MCF 10A (cell line): ENCODE measurements at regions of chr12 and their contacts with region 1.

Region 1: GRCh38 chr12:2682296-2683251 is 112.2 kb upstream of the FKBP4 start:
- DNase-seq: peak; percentile 55
- H3K4me3 Mint-ChIP-seq: no peak overlapping the region
- H3K27ac Mint-ChIP-seq: no peak overlapping the region
- H3K4me1 Mint-ChIP-seq: no peaks in the 10 kb centered on the region
- H3K27me3 Mint-ChIP-seq: peaks cover 14% of the 10 kb centered on the region
- CTCF ChIP-seq: peak; percentile 37

Region 2: DNA sequence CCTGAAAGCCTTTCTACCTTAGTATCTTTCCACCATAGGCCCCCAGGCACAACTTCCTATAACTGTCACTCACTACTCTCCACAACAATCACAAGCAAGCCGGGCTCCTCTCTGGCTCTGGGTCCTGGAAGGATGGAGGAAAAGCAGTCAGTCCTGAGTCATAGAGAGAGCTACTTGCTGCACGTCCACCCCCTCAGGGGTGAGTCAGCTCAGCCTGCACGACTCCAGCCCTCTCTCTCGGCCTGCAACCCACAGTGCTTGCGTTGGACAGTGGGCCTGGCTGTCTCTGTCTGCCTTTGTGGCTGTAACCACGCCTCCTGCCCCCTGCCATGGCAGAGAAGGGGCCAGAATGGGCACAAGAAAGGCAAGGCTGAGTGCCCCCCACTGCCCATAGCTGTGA is 41.9 kb before region 1 on chr12:
- CTCF ChIA-PET with region 1: interaction called, 3 read pairs
- POLR2A ChIA-PET with region 1: no interaction called
- intact Hi-C with region 1: loop called (anchors 1 kb)
- DNase-seq: peak; percentile 94
- H3K4me3 Mint-ChIP-seq: peak overlapping the region; percentile 28
- H3K27ac Mint-ChIP-seq: peak overlapping the region; percentile 61
- H3K4me1 Mint-ChIP-seq: peaks cover 14% of the 10 kb centered on the region
- H3K27me3 Mint-ChIP-seq: peaks cover 31% of the 10 kb centered on the region
- CTCF ChIP-seq: no peak

Region 3: GRCh38 chr12:2733477-2734355 is 51.1 kb after region 1 on chr12:
- CTCF ChIA-PET with region 1: interaction called, 5 read pairs
- POLR2A ChIA-PET with region 1: no interaction called
- intact Hi-C with region 1: loop called (anchors 5 kb)
- DNase-seq: no peak
- H3K4me3 Mint-ChIP-seq: no peak overlapping the region
- H3K27ac Mint-ChIP-seq: no peak overlapping the region
- H3K4me1 Mint-ChIP-seq: no peaks in the 10 kb centered on the region
- H3K27me3 Mint-ChIP-seq: peaks cover 94% of the 10 kb centered on the region
- CTCF ChIP-seq: no peak

Region 4: GRCh38 chr12:2783936-2784600 is 101.5 kb after region 1 on chr12:
- CTCF ChIA-PET with region 1: interaction called, 38 read pairs
- POLR2A ChIA-PET with region 1: no interaction called
- intact Hi-C with region 1: loop called (anchors 1 kb)
- DNase-seq: peak; percentile 54
- H3K4me3 Mint-ChIP-seq: no peak overlapping the region
- H3K27ac Mint-ChIP-seq: no peak overlapping the region
- H3K4me1 Mint-ChIP-seq: peaks cover 6% of the 10 kb centered on the region
- H3K27me3 Mint-ChIP-seq: peaks cover 80% of the 10 kb centered on the region
- CTCF ChIP-seq: peak; percentile 83